ENCODE measurements at regions of chr11 and their contacts with region 1.

Region 1: GRCh38 chr11:95067039-95067840 is 521 bp downstream of the SRSF8 start:
- DNase-seq: peak; percentile 78
- ATAC-seq: peak; percentile 64
- H3K4me3 Mint-ChIP-seq: peak overlapping the region; percentile 100
- H3K27ac Mint-ChIP-seq: peak overlapping the region; percentile 98
- H3K4me1 Mint-ChIP-seq: peaks cover 22% of the 10 kb centered on the region
- H3K27me3 Mint-ChIP-seq: no peaks in the 10 kb centered on the region
- CTCF ChIP-seq: peak; percentile 41

Region 2: DNA sequence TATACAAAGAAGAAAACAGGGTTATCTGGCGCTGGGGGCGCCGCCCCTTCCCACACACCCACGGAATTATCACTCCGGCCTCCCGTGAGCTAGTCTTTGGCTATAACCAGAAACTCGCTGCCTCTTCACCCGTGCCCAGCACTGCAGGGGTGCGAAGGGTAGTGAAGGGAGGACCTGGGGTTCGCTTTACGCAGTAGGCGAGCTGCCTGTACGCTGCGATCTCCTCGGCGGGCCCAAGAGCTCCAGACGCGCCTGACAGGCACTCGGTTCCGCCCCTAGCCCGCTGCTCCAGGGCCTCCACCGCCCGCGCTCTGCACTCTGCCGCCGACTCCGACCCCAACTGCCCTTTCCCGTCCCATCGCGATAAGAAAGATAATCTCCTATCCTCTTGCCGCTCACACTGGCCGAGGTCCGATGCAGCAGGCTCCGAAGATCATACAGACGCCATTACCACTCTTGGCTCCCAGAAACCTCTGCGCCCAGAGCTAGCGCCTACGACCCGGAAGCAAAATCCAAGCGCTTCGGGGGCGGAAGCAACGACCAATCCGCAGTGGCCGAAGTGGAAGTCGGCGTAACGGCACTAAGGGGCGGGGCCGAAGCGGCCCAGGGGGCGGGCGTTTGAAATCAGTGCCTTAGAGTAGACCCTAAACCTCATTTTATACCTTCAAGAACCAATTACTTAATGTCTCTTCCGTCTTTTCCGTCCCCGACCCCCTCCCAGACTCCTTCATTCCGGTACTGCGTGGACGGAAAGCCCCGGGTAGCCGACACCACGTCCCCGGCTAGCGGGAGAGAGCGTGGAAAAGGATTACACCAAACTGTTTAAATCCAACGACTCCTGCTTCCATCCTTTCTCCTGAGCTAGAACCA is 93.9 kb before region 1 on chr11 and contains the starts of genes CWC15 and KDM4D:
- CTCF ChIA-PET with region 1: interaction called, 7 read pairs
- POLR2A ChIA-PET with region 1: interaction called, 4 read pairs
- intact Hi-C with region 1: loop called (anchors 5 kb)
- DNase-seq: peak; percentile 97
- ATAC-seq: peak; percentile 99
- H3K4me3 Mint-ChIP-seq: peak within 1 kb of the TSS; percentile 87
- H3K27ac Mint-ChIP-seq: peak within 1 kb of the TSS; percentile 97
- H3K4me1 Mint-ChIP-seq: peaks cover 29% of the 10 kb centered on the region
- H3K27me3 Mint-ChIP-seq: no peaks in the 10 kb centered on the region
- CTCF ChIP-seq: no peak
- total RNA-seq, gene CWC15: 72.5 to 76.4 TPM
- total RNA-seq, gene KDM4D: 1.1 to 1.6 TPM

Region 3: GRCh38 chr11:95084509-95084908 is 17.3 kb after region 1 on chr11:
- CTCF ChIA-PET with region 1: interaction called, 132 read pairs
- POLR2A ChIA-PET with region 1: interaction called, 57 read pairs
- intact Hi-C with region 1: no loop called
- DNase-seq: peak; percentile 84
- ATAC-seq: peak; percentile 77
- H3K4me3 Mint-ChIP-seq: no peak overlapping the region
- H3K27ac Mint-ChIP-seq: peak overlapping the region; percentile 79
- H3K4me1 Mint-ChIP-seq: peaks cover 44% of the 10 kb centered on the region
- H3K27me3 Mint-ChIP-seq: no peaks in the 10 kb centered on the region
- CTCF ChIP-seq: no peak

Region 4: GRCh38 chr11:95089620-95090542 is 22.6 kb after region 1 on chr11 and contains the start of gene ENDOD1:
- CTCF ChIA-PET with region 1: interaction called, 132 read pairs
- POLR2A ChIA-PET with region 1: interaction called, 57 read pairs
- intact Hi-C with region 1: loop called (anchors 2 kb)
- DNase-seq: peak; percentile 82
- ATAC-seq: peak; percentile 93
- H3K4me3 Mint-ChIP-seq: peak within 1 kb of the TSS; percentile 90
- H3K27ac Mint-ChIP-seq: peak within 1 kb of the TSS; percentile 95
- H3K4me1 Mint-ChIP-seq: peaks cover 65% of the 10 kb centered on the region
- H3K27me3 Mint-ChIP-seq: no peaks in the 10 kb centered on the region
- CTCF ChIP-seq: peak; percentile 16
- total RNA-seq, gene ENDOD1: 13.0 to 14.1 TPM

Region 5: GRCh38 chr11:95095858-95096587 is 28.8 kb after region 1 on chr11:
- CTCF ChIA-PET with region 1: interaction called, 132 read pairs
- POLR2A ChIA-PET with region 1: interaction called, 57 read pairs
- intact Hi-C with region 1: loop called (anchors 2 kb)
- DNase-seq: no peak
- ATAC-seq: peak; percentile 85
- H3K4me3 Mint-ChIP-seq: no peak overlapping the region
- H3K27ac Mint-ChIP-seq: peak overlapping the region; percentile 64
- H3K4me1 Mint-ChIP-seq: peaks cover 69% of the 10 kb centered on the region
- H3K27me3 Mint-ChIP-seq: no peaks in the 10 kb centered on the region
- CTCF ChIP-seq: no peak

Region 6: DNA sequence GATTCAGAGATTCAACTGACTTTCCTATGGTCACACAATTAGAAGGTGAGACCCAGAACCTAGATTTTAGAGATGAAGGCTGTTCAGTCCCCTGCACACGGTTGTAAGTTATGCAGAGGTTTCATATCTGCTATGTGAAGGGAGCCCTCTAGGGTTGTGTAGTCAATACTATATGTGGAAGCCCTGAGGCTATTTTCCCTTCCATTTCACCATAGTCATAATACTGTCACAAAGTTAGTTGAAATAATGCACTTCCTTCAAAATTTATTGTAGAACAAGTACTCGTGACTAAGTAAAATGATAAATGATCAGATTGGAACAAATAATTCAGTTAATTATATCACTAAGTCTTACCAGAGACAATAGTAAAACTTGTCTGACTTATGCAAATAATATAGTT is 71.2 kb after region 1 on chr11:
- CTCF ChIA-PET with region 1: interaction called, 47 read pairs
- POLR2A ChIA-PET with region 1: interaction called, 6 read pairs
- intact Hi-C with region 1: no loop called
- DNase-seq: no peak
- ATAC-seq: peak; percentile 80
- H3K4me3 Mint-ChIP-seq: no peak overlapping the region
- H3K27ac Mint-ChIP-seq: no peak overlapping the region
- H3K4me1 Mint-ChIP-seq: peaks cover 15% of the 10 kb centered on the region
- H3K27me3 Mint-ChIP-seq: peaks cover 5% of the 10 kb centered on the region
- CTCF ChIP-seq: peak; percentile 45

Region 7: GRCh38 chr11:95790123-95790932 is 723.1 kb after region 1 on chr11 and contains the start of gene CEP57:
- CTCF ChIA-PET with region 1: interaction called, 4 read pairs
- POLR2A ChIA-PET with region 1: interaction called, 10 read pairs
- intact Hi-C with region 1: no loop called
- DNase-seq: peak; percentile 98
- ATAC-seq: peak; percentile 60
- H3K4me3 Mint-ChIP-seq: peak within 1 kb of the TSS; percentile 98
- H3K27ac Mint-ChIP-seq: peak within 1 kb of the TSS; percentile 100
- H3K4me1 Mint-ChIP-seq: peaks cover 52% of the 10 kb centered on the region
- H3K27me3 Mint-ChIP-seq: no peaks in the 10 kb centered on the region
- CTCF ChIP-seq: no peak
- total RNA-seq, gene CEP57: 123 to 124 TPM